GM12878 (cell line): ENCODE measurements at regions of chr1 and their contacts with region 1.

Region 1: GRCh38 chr1:44002606-44003157 is 11.3 kb downstream of the CCDC24 start:
- DNase-seq: no peak
- ATAC-seq: no peak
- H3K4me3 ChIP-seq: no peak overlapping the region
- H3K27ac ChIP-seq: no peak overlapping the region
- H3K4me1 ChIP-seq: no peaks in the 10 kb centered on the region
- H3K27me3 ChIP-seq: no peaks in the 10 kb centered on the region
- CTCF ChIP-seq: 0 out of 6 replicates have a peak, but pooled peaks of 1 of the 3 experiments have one; percentile 28
- EP300 ChIP-seq: no peak
- POLR2A ChIP-seq: no peak
- RAD21 ChIP-seq: no peak

Region 2: GRCh38 chr1:43822040-43822439 is 180.6 kb before region 1 on chr1:
- CTCF ChIA-PET with region 1: no interaction called
- POLR2A ChIA-PET with region 1: no interaction called
- RAD21 ChIA-PET with region 1: no interaction called
- SMC1A ChIA-PET with region 1: no interaction called
- in situ Hi-C with region 1: no loop called
- intact Hi-C with region 1: no loop called
- DNase-seq: no peak
- ATAC-seq: no peak
- H3K4me3 ChIP-seq: no peak overlapping the region
- H3K27ac ChIP-seq: no peak overlapping the region
- H3K4me1 ChIP-seq: no peaks in the 10 kb centered on the region
- H3K27me3 ChIP-seq: no peaks in the 10 kb centered on the region
- CTCF ChIP-seq: no peak
- EP300 ChIP-seq: no peak
- POLR2A ChIP-seq: no peak
- RAD21 ChIP-seq: no peak

Region 3: GRCh38 chr1:44012941-44013609 is 10.4 kb after region 1 on chr1:
- CTCF ChIA-PET with region 1: interaction called, 15 read pairs
- POLR2A ChIA-PET with region 1: no interaction called
- RAD21 ChIA-PET with region 1: no interaction called
- SMC1A ChIA-PET with region 1: interaction called, 5 read pairs
- in situ Hi-C with region 1: no loop called
- intact Hi-C with region 1: no loop called
- DNase-seq: no peak
- ATAC-seq: no peak
- H3K4me3 ChIP-seq: no peak overlapping the region
- H3K27ac ChIP-seq: no peak overlapping the region
- H3K4me1 ChIP-seq: no peaks in the 10 kb centered on the region
- H3K27me3 ChIP-seq: no peaks in the 10 kb centered on the region; a peak in 1 of 4 replicates
- CTCF ChIP-seq: no peak
- EP300 ChIP-seq: no peak
- POLR2A ChIP-seq: no peak
- RAD21 ChIP-seq: no peak

Region 4: DNA sequence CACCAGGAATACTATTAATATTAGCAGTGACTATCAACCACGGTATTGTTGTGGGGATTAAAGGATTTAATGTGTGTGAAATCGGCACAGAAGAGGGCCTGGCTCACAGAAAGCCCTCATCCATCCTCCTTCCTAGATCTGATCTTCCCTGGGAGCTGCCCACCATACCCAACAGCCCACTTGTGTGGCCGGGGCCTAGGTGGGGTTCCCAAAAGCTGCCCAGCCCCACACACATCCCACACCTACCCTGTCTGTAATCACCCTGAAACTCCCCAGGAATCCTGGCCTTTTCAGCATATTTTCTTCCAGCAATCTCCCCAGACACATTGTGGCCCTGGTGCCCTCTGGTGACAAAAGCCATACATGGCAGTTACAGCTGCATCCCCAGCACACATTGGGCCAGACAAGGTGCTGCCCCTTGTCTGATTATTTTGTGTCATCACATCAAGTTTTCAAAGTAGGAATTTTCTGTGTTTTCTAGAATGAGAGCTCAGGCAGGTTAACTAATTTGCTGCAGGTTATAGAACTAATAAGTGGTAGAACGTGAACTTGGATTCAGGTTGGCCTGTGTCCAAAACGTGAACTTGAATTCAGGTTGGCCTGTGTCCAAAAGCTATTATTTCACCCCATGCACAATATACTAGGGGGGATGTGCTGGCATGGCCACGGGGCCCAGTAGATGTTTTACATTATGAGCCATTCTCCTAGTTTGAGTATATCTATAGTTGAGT is 33.9 kb after region 1 on chr1:
- CTCF ChIA-PET with region 1: interaction called, 167 read pairs
- POLR2A ChIA-PET with region 1: no interaction called
- RAD21 ChIA-PET with region 1: interaction called, 39 read pairs
- SMC1A ChIA-PET with region 1: interaction called, 37 read pairs
- in situ Hi-C with region 1: no loop called
- intact Hi-C with region 1: loop called (anchors 1 kb)
- DNase-seq: no peak
- ATAC-seq: peak; percentile 92
- H3K4me3 ChIP-seq: no peak overlapping the region
- H3K27ac ChIP-seq: no peak overlapping the region
- H3K4me1 ChIP-seq: peaks cover 9% of the 10 kb centered on the region; the same call in 1 of the 2 replicates
- H3K27me3 ChIP-seq: no peaks in the 10 kb centered on the region
- CTCF ChIP-seq: peak; percentile 91 to 96 (median 95)
- EP300 ChIP-seq: no peak
- POLR2A ChIP-seq: no peak
- RAD21 ChIP-seq: peak; percentile 83

Region 5: DNA sequence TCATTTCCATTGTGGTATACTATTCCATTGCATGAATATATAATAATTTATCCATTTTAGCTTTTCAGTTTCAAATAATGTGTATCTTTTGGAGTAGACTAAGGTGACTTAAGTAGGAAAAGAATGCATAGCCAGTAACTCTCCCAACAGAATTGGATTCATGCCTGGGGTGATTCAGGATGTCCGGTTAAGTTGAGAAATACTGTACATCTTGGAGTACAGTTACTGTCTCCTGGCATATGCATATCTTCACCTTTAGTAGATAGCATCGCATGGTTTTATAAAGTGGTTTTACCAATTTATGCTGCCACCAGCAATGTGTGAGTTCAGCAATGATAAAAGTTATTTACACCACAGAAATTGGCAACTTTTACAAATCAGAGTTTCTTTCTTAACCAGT is 47.2 kb after region 1 on chr1:
- CTCF ChIA-PET with region 1: interaction called, 167 read pairs
- POLR2A ChIA-PET with region 1: no interaction called
- RAD21 ChIA-PET with region 1: interaction called, 6 read pairs
- SMC1A ChIA-PET with region 1: interaction called, 12 read pairs
- in situ Hi-C with region 1: no loop called
- intact Hi-C with region 1: loop called (anchors 1 kb)
- DNase-seq: no peak
- ATAC-seq: no peak
- H3K4me3 ChIP-seq: no peak overlapping the region
- H3K27ac ChIP-seq: no peak overlapping the region
- H3K4me1 ChIP-seq: no peaks in the 10 kb centered on the region
- H3K27me3 ChIP-seq: no peaks in the 10 kb centered on the region
- CTCF ChIP-seq: no peak
- EP300 ChIP-seq: no peak
- POLR2A ChIP-seq: no peak
- RAD21 ChIP-seq: no peak

Region 6: DNA sequence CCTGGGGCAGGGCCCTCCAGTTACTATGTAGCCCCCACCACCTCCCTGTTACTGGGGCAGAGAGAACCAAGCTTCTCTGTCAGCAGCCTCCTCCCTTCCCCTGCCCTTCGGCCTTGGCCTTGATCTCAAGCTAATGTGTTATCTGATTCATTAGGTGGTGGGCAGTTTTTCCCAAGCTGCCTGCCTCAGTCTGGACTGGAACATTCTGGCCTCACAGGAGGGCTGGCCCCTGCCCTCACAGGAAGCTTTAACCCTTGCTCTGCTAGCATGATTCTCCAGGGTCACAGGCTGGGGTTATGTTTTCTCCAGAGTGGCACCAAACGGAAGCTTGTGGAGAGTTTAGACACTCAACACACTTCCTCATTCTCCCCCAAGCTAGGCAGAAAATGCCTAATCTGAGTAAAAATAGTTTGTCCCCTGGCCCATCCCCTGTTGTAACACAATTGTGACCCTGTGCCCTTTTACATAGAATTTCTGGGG is 65.8 kb after region 1 on chr1:
- CTCF ChIA-PET with region 1: interaction called, 11 read pairs
- POLR2A ChIA-PET with region 1: no interaction called
- RAD21 ChIA-PET with region 1: no interaction called
- SMC1A ChIA-PET with region 1: interaction called, 3 read pairs
- in situ Hi-C with region 1: no loop called
- intact Hi-C with region 1: no loop called
- DNase-seq: peak; percentile 48
- ATAC-seq: peak; percentile 73
- H3K4me3 ChIP-seq: no peak overlapping the region
- H3K27ac ChIP-seq: peak overlapping the region; percentile 41
- H3K4me1 ChIP-seq: peaks cover 16% of the 10 kb centered on the region
- H3K27me3 ChIP-seq: no peaks in the 10 kb centered on the region
- CTCF ChIP-seq: no peak
- EP300 ChIP-seq: no peak
- POLR2A ChIP-seq: no peak
- RAD21 ChIP-seq: no peak